MCF 10A (cell line): ENCODE measurements at regions of chr7 and their contacts with region 1.

Region 1: DNA sequence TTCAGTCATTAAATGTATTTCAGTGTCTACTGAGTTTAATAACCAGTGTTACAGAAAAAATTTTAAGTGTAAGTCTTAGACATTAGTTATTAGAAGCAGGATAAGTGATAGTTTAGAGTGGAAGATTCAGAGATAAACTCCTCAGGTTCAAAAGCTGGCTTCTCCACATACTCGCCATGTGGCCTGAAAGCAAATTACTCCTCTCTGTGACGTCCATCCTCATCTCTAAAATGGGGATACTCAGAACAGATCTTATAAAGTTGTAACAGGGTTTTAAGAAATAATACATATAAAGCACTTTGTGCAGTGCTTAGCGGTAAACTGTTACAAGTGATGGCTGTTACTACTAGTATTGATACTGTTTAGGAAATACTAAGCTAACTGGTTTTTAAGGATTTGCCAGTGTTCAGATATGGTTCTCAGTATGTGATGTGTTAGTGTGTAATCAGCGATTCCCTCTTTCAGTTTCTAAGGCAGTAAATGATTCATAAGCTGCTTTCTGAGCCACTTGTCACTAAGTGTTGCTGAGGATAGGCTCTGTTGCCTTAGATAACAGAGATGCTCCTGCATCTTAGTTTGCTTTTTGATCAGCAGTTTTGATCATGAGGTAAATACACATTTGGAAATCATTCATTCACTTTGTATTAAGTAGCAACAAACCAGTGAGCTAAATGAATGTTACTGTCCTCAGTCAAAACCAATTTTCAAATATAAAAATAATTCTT is 58.7 kb downstream of the CYP51A1 start:
- DNase-seq: no peak
- H3K4me3 Mint-ChIP-seq: no peak overlapping the region
- H3K27ac Mint-ChIP-seq: no peak overlapping the region
- H3K4me1 Mint-ChIP-seq: no peaks in the 10 kb centered on the region
- H3K27me3 Mint-ChIP-seq: no peaks in the 10 kb centered on the region
- CTCF ChIP-seq: no peak

Region 2: DNA sequence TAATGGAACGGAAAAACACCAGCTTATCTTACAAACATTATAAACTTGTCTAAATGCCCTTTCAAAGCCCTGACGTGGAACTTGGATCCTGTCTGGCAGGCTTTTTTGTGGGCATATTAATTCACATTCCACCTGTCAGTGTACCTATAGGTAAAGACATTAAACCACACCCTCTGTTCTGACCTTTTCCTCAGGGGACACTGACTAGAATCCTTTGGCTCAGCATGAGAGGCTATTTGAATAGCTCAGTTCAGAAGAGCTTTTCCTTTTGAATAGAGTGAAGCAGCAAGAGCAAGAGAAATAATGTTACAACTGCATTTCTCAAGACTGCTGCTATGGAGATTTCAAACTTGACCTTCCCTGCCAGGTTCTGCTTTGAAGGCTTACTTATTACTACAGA is 18.2 kb before region 1 on chr7:
- CTCF ChIA-PET with region 1: interaction called, 5 read pairs
- POLR2A ChIA-PET with region 1: interaction called, 16 read pairs
- intact Hi-C with region 1: no loop called
- DNase-seq: peak; percentile 35
- H3K4me3 Mint-ChIP-seq: no peak overlapping the region
- H3K27ac Mint-ChIP-seq: no peak overlapping the region
- H3K4me1 Mint-ChIP-seq: peaks cover 14% of the 10 kb centered on the region
- H3K27me3 Mint-ChIP-seq: no peaks in the 10 kb centered on the region
- CTCF ChIP-seq: no peak